GM10248 (cell line): ENCODE measurements at regions of chr10 and their contacts with region 1.

Region 1: GRCh38 chr10:101214446-101215396 is 14.5 kb downstream of the LBX1 start:
- DNase-seq: peak; percentile 79
- CTCF ChIP-seq: peak; percentile 88

Region 2: DNA sequence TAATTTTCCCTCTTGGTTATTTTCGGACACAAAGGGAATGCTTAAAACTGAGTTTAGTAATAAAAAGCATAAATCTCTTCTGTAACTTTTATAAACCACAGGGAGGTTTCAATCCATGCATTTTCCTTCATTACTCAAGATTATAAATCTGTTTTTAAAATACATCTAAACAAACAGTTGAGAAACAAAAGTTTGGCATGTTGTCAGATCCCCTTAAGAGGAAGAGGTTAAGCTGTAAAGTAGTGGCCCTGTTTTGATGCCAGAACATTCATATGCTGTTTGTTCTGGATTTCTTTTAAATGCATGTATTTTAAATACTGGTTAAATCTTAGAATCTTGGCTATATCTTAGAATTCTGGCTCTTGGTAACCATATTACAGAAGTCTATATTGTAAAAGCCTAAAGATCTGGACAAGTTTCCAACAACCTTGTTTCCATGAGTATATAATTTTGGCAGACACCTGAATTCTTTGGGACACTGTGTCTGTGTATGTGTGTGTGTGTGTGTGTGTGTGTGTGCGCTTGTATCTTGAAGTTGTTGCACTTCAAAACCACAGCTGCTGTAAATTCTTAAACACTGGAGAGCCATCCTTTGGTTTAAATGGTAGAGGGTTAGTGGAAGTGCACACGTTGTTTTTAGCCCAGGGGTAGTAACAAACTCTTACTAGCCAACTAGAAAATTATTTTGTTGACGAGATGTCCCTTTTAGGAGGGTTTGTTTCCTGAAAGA is 252.2 kb before region 1 on chr10:
- CTCF ChIA-PET with region 1: no interaction called
- POLR2A ChIA-PET with region 1: no interaction called
- DNase-seq: no peak
- CTCF ChIP-seq: no peak

Region 3: DNA sequence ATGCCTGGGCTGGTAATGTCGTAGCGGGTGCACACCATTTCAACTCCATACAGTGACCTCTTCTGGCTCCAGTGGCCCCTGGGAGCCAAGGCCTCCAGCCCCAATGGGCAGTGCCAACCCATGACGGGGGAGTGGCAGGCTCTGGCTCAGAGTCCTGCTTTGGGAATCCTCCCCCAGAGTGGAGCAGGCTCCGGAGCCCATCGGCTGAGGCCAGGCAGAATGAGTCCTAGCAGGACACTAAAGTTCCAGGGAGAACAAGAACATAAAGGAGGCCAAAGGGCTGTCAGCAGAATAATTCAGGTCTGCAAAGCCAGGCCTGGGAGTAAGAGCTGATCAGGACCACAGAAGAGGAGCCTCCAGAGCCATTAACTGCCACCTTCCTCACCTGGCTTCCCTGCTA is 18.8 kb before region 1 on chr10:
- CTCF ChIA-PET with region 1: interaction called, 15 read pairs
- POLR2A ChIA-PET with region 1: no interaction called
- DNase-seq: no peak
- CTCF ChIP-seq: no peak

Region 4: GRCh38 chr10:101238732-101239105 is 24.0 kb after region 1 on chr10:
- CTCF ChIA-PET with region 1: interaction called, 38 read pairs
- POLR2A ChIA-PET with region 1: no interaction called
- DNase-seq: no peak
- CTCF ChIP-seq: peak; percentile 66

Region 5: GRCh38 chr10:101467286-101467770 is 252.6 kb after region 1 on chr10:
- CTCF ChIA-PET with region 1: interaction called, 24 read pairs
- POLR2A ChIA-PET with region 1: no interaction called
- DNase-seq: peak; percentile 67
- CTCF ChIP-seq: peak; percentile 78

Region 6: DNA sequence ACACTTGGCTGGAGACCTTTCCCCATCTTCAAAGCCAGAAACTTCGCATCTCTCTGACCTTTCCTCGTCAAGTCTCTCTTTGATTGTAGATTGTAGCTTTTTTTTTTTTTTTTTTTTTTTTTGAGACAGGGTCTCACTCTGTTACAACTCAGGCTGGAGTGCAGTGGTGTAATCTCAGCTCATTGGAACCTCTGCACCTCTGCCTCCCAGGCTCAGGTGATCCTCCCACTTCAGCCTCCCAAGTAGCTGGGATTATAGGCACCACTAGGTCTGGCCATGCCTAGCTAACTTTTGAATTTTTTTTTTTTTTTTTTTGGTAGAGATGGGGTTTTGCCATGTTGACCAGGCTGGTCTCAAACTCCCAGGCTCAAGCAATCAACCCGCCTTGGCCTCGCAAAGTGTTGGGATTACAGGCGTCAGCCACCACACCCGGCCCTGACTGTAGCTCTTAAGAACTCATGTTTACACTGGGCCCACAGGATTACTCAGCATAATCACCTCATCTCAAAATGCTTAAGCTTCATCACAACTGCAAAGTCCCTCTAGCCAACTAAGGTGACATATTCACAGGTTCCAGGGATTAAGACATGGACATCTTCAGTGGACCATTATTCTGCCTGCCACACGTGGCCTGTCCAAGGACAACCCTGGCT is 361.6 kb after region 1 on chr10:
- CTCF ChIA-PET with region 1: interaction called, 103 read pairs
- POLR2A ChIA-PET with region 1: no interaction called
- DNase-seq: no peak
- CTCF ChIP-seq: no peak

Region 7: GRCh38 chr10:101602761-101603398 is 388.2 kb after region 1 on chr10:
- CTCF ChIA-PET with region 1: interaction called, 15 read pairs
- POLR2A ChIA-PET with region 1: no interaction called
- DNase-seq: peak; percentile 84
- CTCF ChIP-seq: peak; percentile 96